ENCODE measurements at regions of chr12 and their contacts with region 1.

Region 1: DNA sequence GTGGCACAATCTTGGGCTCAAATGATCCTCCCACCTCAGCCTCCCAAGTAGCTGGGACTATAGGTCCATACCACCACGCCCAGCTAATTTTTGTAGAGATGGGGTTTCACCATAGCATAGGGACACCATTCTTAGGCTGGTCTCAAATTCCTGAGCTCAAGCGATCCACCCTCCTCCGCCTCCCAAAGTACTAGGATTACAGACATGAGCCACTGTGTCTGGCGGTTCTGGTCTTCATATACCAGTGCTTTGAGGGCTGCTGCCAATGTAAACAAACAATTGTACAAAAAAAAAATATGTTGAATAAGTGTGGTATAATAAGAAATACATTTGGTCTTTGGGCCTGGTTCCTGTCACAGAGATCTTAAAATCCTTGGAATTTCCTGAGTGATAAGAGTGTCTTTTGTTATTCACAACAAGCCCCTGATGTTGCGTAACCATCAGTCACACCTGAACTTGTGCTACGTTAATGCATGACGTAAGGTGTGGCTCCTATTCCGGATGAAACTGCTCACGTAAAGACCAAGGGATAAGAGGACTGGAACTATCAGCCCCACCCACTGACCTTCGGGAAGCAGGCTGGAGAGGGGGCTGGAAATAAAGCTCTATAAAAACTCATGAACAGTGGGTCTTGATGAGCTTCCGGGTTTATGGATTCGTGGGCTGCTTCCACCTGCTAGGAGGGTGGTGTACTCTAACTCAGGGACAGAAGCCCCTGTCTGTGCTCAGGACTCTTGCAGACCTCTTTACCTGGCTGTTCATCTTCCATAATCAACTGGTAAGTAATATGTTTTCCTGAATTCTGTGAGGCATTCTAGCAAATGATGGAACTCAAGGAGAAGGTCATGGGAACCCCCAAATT is 16.5 kb upstream of the RIMKLB start:
- DNase-seq: peak in 1 of 2 donors; percentile 62
- H3K4me3 ChIP-seq: peak overlapping the region in 1 of 2 donors; percentile 16
- H3K27ac ChIP-seq: peak overlapping the region; percentile 31 to 63
- H3K4me1 ChIP-seq: peaks cover 6 to 7% of the 10 kb centered on the region in 2 donors
- H3K27me3 ChIP-seq: no peaks in the 10 kb centered on the region
- CTCF ChIP-seq: no peak

Region 2: DNA sequence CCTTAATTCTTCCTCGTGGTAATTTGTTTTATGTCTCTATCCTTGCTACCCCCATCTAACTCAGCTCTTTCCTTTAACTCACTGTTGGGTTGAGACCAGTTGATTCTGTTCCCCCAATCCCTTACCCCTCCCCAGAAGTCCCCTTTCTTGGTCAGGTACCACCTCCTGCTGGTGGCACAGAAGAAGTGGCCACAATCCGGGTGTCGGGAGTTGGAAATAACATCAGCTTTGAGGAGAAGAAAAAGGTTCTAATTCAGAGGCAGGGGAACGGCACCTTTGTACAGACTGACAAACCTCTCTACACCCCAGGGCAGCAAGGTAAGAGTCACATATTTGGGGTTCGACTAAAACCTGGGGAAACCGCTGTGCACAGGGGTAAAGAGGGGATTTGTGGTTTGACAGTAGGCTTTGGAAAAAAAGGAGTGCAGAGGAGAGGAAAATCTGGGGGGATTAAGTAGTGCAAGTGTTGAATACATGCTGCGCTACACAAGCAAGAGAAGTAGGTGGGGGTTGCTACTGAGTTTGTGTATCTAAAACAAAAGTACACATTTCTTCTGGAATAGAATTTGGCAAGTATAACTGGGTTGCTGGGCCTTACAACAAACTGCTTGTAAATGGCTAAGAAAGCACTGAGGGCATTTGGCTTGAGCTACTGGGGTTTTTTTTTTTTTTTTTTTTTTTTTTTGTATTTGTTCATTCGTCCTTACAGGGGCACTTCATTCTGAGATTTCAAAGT is 142.5 kb after region 1 on chr12:
- intact Hi-C with region 1: loop called (anchors 1 kb)
- DNase-seq: no peak
- H3K4me3 ChIP-seq: no peak overlapping the region
- H3K27ac ChIP-seq: no peak overlapping the region
- H3K4me1 ChIP-seq: no peaks in the 10 kb centered on the region
- H3K27me3 ChIP-seq: no peaks in the 10 kb centered on the region
- CTCF ChIP-seq: peak; percentile 73 to 89 (median 73)

Region 3: GRCh38 chr12:8849876-8850275 is 168.6 kb after region 1 on chr12:
- intact Hi-C with region 1: no loop called
- DNase-seq: no peak
- H3K4me3 ChIP-seq: no peak overlapping the region
- H3K27ac ChIP-seq: no peak overlapping the region
- H3K4me1 ChIP-seq: no peaks in the 10 kb centered on the region
- H3K27me3 ChIP-seq: no peaks in the 10 kb centered on the region
- CTCF ChIP-seq: no peak

Region 4: DNA sequence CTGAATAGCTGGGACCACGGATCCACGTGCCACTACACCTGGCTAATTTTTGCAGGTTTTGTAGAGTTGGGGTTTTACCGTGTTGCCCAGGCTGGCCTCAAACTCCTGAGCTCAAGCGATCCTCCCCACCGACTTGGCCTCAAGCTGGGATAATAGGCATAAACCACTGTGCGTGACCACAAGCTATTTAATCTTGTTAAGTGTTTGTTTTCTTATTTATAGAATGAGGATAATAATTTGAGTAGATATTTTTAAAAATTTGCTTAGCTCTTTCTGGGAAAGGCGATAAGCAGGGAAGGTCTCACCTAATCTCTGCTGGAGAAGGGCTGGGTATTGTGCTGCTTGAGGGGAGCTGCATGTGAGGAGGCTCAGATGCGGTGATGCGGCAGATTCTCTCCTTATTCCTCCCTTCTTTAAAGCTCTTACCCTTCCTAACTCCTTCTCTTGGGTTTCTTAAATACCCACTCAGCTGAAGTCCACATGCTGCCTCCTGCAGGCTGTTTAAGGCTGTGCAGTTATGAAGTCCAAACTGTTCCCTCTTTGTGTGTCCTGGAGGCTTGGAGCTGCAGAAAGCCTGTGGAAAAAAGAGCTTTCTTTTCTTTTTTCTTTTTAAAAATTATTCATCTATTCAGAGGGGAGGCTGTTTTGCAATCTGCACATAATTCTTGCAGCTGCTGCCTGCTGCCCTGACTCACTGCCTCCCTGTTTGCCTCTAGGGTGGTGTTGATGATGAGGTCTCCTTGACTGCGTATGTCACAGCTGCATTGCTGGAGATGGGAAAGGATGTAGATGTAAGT is 179.1 kb after region 1 on chr12:
- intact Hi-C with region 1: loop called (anchors 1 kb)
- DNase-seq: peak in 1 of 2 donors; percentile 68
- H3K4me3 ChIP-seq: no peak overlapping the region
- H3K27ac ChIP-seq: no peak overlapping the region
- H3K4me1 ChIP-seq: no peaks in the 10 kb centered on the region
- H3K27me3 ChIP-seq: no peaks in the 10 kb centered on the region
- CTCF ChIP-seq: peak; percentile 33 to 59 (median 55)

Region 5: GRCh38 chr12:8890313-8891085 is 209.2 kb after region 1 on chr12:
- intact Hi-C with region 1: loop called (anchors 2 kb)
- DNase-seq: no peak
- H3K4me3 ChIP-seq: peak overlapping the region; percentile 45 to 60
- H3K27ac ChIP-seq: no peak overlapping the region
- H3K4me1 ChIP-seq: no peaks in the 10 kb centered on the region
- H3K27me3 ChIP-seq: no peaks in the 10 kb centered on the region
- CTCF ChIP-seq: peak; percentile 56 to 88 (median 87)

Region 6: DNA sequence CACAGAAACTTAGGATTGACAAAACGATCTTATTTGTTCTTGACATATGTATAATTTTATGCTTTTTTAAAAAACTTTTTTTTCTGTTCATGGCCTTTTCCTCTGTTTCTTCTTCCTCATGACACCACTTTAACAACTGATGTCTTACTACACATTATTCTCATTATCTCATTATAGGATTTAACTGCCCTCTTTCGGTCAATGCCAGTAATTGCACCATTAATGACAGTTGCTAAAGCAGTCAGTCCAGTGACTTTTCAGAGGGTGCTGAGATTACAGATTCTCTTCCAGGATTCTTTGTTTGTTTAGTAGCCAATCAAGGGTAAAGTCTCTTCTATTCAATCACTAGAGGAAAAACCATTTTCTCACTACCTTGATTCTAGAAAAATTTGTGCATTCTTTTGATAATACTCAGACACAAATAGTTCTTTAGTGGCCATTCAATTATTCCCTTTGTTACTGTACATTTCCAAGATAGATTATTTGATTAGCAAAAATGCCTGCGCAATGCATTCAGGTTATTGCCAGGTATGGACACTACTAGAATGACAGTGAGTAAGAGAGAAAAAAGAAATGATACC is 358.2 kb after region 1 on chr12:
- intact Hi-C with region 1: loop called (anchors 5 kb)
- DNase-seq: no peak
- H3K4me3 ChIP-seq: no peak overlapping the region
- H3K27ac ChIP-seq: no peak overlapping the region
- H3K4me1 ChIP-seq: no peaks in the 10 kb centered on the region
- H3K27me3 ChIP-seq: no peaks in the 10 kb centered on the region
- CTCF ChIP-seq: peak; percentile 39 to 71 (median 67)

Measured in ascending aorta (tissue), 2 donors.